ENCODE measurements at regions of chr2 and their contacts with region 1.

Region 1: DNA sequence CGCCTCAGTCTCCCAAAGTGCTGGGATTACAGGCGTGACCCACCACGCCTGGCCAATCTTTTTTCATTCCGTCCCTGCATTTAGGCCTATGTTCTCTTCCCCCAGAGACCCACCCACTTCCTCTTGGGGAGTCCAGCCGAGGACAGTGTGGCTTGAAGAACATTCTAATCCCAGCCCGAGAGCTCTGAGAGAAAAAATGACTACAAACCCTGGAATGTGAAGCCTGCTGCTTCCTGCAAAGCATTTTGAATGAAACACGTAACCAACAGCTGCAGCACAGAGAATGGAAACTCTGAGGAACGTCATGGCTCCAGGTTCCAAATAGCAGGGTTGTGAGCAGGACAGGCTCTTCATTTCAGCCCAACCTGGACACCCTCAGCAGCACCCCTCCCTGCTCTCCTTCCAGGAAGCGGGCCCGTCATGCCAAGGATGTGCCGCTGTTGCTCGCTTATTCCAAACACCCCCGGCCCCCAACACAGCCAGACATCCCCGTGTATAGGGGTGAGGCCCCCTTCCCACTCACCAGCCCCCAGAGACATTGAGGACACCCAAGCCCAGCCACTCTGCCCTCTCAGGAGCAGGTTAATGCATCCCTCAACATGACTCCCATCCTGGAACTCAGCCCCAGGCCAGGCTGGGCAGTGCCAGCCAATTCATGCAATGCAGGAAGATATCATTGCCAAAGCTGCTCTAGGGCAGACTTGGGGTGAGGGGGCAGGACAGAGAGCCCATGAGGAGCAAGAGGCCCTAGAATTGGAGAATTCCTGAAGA is 139.8 kb downstream of the ZFP36L2 start:
- DNase-seq: peak; percentile 98
- H3K4me3 ChIP-seq: no peak overlapping the region
- H3K27ac ChIP-seq: peak overlapping the region; percentile 99
- H3K27me3 ChIP-seq: no peaks in the 10 kb centered on the region
- CTCF ChIP-seq: no peak

Region 2: GRCh38 chr2:43068041-43068533 is 18.5 kb before region 1 on chr2:
- CTCF ChIA-PET with region 1: no interaction called
- POLR2A ChIA-PET with region 1: no interaction called
- DNase-seq: no peak
- H3K4me3 ChIP-seq: no peak overlapping the region
- H3K27ac ChIP-seq: no peak overlapping the region
- H3K27me3 ChIP-seq: no peaks in the 10 kb centered on the region
- CTCF ChIP-seq: no peak

Region 3: DNA sequence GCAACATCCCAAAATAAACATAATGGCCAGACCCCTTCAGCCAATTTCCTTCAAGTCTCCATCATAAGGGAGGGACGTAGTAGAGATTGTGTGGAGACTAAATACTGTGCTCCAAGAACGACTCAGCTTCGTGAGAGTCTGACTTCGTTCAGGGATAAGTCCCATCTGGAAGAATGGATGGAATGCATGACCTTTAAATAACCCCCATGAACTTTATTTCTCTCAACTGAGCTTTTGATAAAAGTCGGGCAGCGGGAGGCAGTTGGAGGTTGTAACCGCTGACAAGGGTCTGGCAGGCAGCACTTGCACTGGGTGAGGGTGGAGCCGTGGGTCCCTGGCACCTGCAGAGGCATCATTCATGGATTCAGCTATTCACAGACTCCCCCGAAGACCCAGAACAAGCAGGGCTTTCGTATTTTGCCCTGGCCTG is 23.8 kb after region 1 on chr2:
- CTCF ChIA-PET with region 1: interaction called, 6 read pairs
- POLR2A ChIA-PET with region 1: interaction called, 22 read pairs
- DNase-seq: peak; percentile 56
- H3K4me3 ChIP-seq: no peak overlapping the region
- H3K27ac ChIP-seq: peak overlapping the region; percentile 73
- H3K27me3 ChIP-seq: no peaks in the 10 kb centered on the region
- CTCF ChIP-seq: no peak

Measured in AG04450 (cell line).